Activated T-helper 2 cell treated with anti-CD3 and anti-CD28 coated beads, Interferon-gamma antibody, Interleukin-2, Interleukin-4, amounts not matched to agents 10 μg/mL and 5 μg/mL and 100 μg/mL, durations not matched to agents 14 hours and 24 hours and 36 hours (primary cell): ENCODE measurements at regions of chr6 and their contacts with region 1.

Region 1: DNA sequence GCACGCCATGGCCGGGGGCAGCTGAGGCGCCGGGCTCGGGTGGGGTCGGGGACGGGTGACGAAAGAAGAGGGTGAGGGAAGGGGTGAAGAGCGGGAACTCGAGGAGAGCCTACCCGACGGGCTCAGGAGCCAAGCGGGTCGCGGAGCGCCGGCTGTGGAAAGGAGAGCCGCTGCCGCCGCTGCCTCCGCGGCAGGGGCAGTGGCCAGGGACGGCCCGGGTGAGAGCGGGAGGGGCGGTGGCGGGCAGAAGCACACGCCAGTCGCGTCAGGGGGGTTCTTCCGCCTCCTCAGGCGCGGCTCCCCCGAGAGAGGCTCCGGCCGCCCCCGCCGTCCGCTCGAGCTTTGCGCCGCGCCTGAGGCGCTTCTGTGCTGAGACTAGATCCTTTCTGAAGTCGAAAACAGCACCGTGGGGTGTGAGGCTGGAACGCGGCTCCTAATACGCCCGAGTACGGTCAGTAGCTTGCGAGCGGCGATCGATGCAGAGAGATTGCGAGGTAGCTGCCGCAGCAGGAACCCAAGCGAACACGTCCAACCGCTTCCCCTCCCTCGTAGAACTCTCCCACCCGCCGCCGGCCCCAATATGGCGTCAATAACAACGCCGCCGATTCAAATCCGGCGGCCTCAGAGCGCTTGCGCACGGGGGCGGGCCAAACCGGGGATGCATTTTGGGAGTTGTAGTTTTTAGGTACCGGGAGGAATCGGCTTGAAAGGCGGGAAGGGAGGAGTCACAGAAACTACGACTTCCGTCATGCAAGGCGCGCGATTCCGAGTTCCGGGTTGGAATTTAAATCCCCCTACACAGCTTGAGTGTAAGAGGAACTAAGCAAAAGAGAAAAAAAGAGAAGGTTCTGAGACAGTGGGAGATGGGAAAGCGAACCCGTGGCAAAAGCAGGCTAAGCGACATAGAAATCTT is at the start of gene AKIRIN2:
- DNase-seq: peak; percentile 96
- H3K4me3 Mint-ChIP-seq: peak within 1 kb of the TSS; percentile 98
- H3K27ac Mint-ChIP-seq: peak within 1 kb of the TSS; percentile 94
- H3K4me1 Mint-ChIP-seq: peaks cover 34% of the 10 kb centered on the region
- H3K27me3 Mint-ChIP-seq: no peaks in the 10 kb centered on the region
- total RNA-seq, gene AKIRIN2: 41.9 and 42.0 TPM in 2 replicates

Region 2: DNA sequence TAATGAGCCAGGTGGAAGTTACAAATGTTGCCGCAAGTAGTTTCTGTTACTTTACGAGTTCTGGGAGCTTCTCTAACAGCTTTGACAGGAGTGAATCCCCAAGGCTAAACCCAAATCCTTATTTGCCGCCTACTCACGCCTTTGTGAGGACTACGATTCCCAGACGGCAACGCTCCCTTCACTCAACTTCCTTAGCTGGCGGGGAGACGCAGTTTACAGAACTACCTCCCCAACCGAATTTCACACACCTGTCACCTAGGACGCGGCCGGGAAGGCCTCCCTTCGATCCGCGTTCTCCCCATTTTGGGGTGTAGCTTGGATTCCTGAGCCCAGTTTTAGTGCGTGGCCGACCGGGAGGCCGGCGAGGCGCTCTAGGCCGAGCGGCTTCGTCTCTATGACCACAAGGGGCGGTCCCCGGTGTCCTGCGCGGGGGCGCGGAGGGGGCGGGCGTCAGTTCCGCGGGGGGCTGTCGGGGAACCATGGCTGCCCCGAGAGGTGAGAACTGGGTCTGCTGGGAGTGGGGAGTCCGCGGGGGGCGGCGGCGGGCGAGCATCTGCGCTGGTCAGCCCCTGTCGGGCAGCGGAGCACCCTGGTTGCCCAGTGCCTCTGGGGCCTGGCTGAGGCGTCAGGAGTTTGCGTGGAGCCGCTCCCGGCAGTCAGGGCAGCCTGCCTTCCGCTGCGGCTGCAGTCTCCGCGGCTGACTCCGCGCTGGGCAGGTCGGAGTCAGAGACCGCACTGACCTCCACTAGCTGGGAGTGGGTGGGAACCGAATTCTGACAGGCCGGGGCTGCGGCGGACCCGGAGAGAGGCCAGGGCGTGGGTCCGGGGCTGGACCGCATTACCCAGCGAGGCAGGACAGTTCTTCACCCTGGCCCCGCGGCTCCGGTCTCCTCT is 229.2 kb before region 1 on chr6 and contains the start of gene SLC35A1:
- intact Hi-C with region 1: loop called (anchors 2 kb)
- DNase-seq: peak; percentile 79
- H3K4me3 Mint-ChIP-seq: peak within 1 kb of the TSS; percentile 88
- H3K27ac Mint-ChIP-seq: peak within 1 kb of the TSS; percentile 88
- H3K4me1 Mint-ChIP-seq: peaks cover 7% of the 10 kb centered on the region
- H3K27me3 Mint-ChIP-seq: peaks cover 8% of the 10 kb centered on the region
- total RNA-seq, gene SLC35A1: 10.5 and 11.1 TPM in 2 replicates

Region 3: DNA sequence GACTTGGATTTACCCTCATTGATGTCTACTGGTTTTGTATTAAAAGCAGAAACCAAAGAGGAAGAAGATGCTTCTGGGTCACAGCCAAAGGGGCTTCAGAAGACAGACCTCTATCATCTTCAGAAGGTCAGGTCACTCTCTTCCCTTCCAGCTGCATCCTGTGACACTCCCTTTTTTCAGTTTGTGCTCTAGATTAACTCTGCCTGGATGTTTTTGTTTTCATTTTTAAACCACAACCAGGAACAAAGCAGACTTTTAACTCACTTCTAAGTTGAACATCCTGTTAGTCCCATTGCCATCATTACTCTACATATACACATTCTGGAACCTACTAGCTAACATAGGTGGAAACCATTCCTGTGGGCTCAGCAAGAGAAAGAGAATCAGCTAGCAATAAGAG is 45.1 kb before region 1 on chr6:
- intact Hi-C with region 1: loop called (anchors 5 kb)
- DNase-seq: no peak
- H3K4me3 Mint-ChIP-seq: no peak overlapping the region
- H3K27ac Mint-ChIP-seq: peak overlapping the region; percentile 43
- H3K4me1 Mint-ChIP-seq: peaks cover 37% of the 10 kb centered on the region
- H3K27me3 Mint-ChIP-seq: no peaks in the 10 kb centered on the region

Region 4: DNA sequence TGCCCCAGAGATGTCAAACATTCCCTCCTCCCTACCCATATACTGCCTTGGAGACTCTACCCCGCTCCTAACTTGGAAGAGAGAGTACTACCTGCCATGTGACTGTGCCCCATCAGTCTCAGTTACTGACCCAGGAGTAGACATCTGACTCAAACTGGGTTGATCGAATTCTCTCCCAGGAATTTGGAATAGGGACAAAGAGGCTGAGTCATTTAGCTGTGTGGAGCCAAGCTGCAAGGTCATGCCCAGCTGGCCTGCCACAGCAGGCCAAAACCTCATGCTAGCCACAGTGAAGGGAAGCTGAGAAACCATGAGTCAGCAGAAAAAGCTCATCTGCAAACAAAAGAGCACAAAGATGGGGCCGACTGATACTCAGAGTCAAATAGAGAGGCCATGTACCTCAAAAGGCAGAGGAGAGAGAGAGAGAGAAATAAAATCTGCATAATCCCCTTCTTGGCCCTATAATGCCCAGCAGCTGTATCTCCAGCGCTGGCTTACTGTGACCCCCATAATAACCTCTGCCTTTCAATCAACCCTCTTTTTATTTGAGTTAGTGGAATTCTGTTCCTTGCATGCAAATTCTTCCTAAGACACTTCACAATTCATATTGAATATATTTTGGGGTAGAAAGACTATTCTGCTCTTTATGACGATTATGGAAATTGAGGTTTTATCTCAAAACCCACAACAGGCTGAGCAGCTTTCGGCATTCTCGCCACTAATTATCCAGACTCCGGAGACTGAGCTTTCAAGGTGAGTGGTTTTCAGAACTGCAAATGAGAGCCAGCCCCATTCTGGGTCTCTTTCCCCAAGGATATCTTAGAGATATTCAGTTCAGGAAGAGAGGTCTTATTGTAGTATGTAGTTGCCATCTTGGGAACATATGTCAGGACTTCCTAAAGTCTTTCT is 21.5 kb after region 1 on chr6:
- intact Hi-C with region 1: loop called (anchors 1 kb)
- DNase-seq: no peak
- H3K4me3 Mint-ChIP-seq: no peak overlapping the region
- H3K27ac Mint-ChIP-seq: no peak overlapping the region
- H3K4me1 Mint-ChIP-seq: peaks cover 26% of the 10 kb centered on the region
- H3K27me3 Mint-ChIP-seq: peaks cover 3% of the 10 kb centered on the region

Region 5: GRCh38 chr6:87738000-87738399 is 36.1 kb after region 1 on chr6:
- intact Hi-C with region 1: loop called (anchors 1 kb)
- DNase-seq: no peak
- H3K4me3 Mint-ChIP-seq: no peak overlapping the region
- H3K27ac Mint-ChIP-seq: no peak overlapping the region
- H3K4me1 Mint-ChIP-seq: peaks cover 31% of the 10 kb centered on the region
- H3K27me3 Mint-ChIP-seq: no peaks in the 10 kb centered on the region

Region 6: GRCh38 chr6:87808005-87808757 is 106.2 kb after region 1 on chr6:
- intact Hi-C with region 1: loop called (anchors 2 kb)
- DNase-seq: no peak
- H3K4me3 Mint-ChIP-seq: no peak overlapping the region
- H3K27ac Mint-ChIP-seq: no peak overlapping the region
- H3K4me1 Mint-ChIP-seq: peaks cover 11% of the 10 kb centered on the region
- H3K27me3 Mint-ChIP-seq: peaks cover 10% of the 10 kb centered on the region

Region 7: DNA sequence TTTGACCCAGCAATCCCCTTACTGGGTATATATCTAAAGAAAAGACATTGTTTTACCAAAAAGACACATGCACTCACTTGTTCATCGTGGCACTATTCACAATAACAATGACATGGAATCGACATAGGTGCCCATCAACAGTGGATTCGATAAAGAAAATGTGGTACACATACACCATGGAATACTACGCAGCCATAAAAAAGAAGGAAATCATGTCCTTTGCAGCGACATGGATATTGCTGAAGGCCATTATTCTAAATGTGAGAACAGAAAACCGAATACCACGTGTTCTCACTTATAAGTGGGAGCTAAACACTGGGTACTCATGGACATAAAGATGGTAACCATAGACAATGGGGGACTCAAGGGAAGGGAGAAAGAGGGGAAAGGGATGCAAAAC is 1039.1 kb after region 1 on chr6:
- intact Hi-C with region 1: no loop called
- DNase-seq: no peak
- H3K4me3 Mint-ChIP-seq: no peak overlapping the region
- H3K27ac Mint-ChIP-seq: no peak overlapping the region
- H3K4me1 Mint-ChIP-seq: no peaks in the 10 kb centered on the region
- H3K27me3 Mint-ChIP-seq: no peaks in the 10 kb centered on the region

Region 8: GRCh38 chr6:88963139-88964090 is 1261.5 kb after region 1 on chr6 and contains the start of gene RNGTT:
- intact Hi-C with region 1: loop called (anchors 1 kb)
- DNase-seq: peak; percentile 95
- H3K4me3 Mint-ChIP-seq: peak within 1 kb of the TSS; percentile 97
- H3K27ac Mint-ChIP-seq: peak within 1 kb of the TSS; percentile 83
- H3K4me1 Mint-ChIP-seq: peaks cover 30% of the 10 kb centered on the region
- H3K27me3 Mint-ChIP-seq: peaks cover 2% of the 10 kb centered on the region
- total RNA-seq, gene RNGTT: 23.5 and 24.2 TPM in 2 replicates

Region 9: DNA sequence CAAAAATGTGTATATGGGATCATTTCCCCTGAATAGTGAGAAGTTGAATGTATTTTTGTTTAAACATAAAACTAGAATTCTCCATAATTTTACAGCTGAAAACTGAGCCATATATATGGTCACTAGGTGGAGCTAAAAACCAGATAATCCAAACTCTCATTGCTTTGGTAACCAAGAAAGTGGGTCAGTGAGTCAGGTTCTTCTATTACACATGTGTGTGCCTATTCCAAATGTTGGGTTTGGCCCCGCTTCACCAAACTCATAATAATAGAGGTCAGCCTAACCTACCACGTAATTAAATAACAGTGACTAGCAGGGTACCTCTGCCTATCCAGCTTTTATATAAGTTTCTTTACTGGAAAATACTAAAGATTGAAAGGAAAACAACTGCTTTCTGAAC is 1280.8 kb after region 1 on chr6:
- intact Hi-C with region 1: no loop called
- DNase-seq: no peak
- H3K4me3 Mint-ChIP-seq: no peak overlapping the region
- H3K27ac Mint-ChIP-seq: no peak overlapping the region
- H3K4me1 Mint-ChIP-seq: no peaks in the 10 kb centered on the region
- H3K27me3 Mint-ChIP-seq: peaks cover 10% of the 10 kb centered on the region